CD4-positive, alpha-beta T cell (primary cell): ENCODE measurements at regions of chr7 and their contacts with region 1.

Region 1: GRCh38 chr7:73451780-73452398 is 18.3 kb downstream of the FZD9 start:
- DNase-seq: peak in 4 of 14 experiments; percentile 41 to 80 (median 70)
- ATAC-seq: peak; percentile 95
- H3K4me3 ChIP-seq: no peak overlapping the region
- H3K4me3 Mint-ChIP-seq: no peak overlapping the region
- H3K27ac ChIP-seq: no peak overlapping the region
- H3K27ac Mint-ChIP-seq: peak overlapping the region; percentile 43
- H3K4me1 ChIP-seq: no peaks in the 10 kb centered on the region
- H3K4me1 Mint-ChIP-seq: peaks cover 4% of the 10 kb centered on the region
- H3K27me3 ChIP-seq: no peaks in the 10 kb centered on the region
- H3K27me3 Mint-ChIP-seq: no peaks in the 10 kb centered on the region
- CTCF ChIP-seq: peak; percentile 100

Region 2: GRCh38 chr7:72924733-72925545 is 527.0 kb before region 1 on chr7 and contains the start of gene POM121:
- CTCF ChIA-PET with region 1: no interaction called
- POLR2A ChIA-PET with region 1: no interaction called
- intact Hi-C with region 1: loop called in 1 of 2 experiments (anchors 10 kb)
- DNase-seq: peak; percentile 72 to 95 (median 81)
- ATAC-seq: peak; percentile 94
- H3K4me3 ChIP-seq: peak within 1 kb of the TSS; percentile 91
- H3K4me3 Mint-ChIP-seq: peak within 1 kb of the TSS; percentile 99
- H3K27ac ChIP-seq: peak within 1 kb of the TSS; percentile 92 to 96
- H3K27ac Mint-ChIP-seq: peak within 1 kb of the TSS; percentile 91
- H3K4me1 ChIP-seq: peaks cover 17% of the 10 kb centered on the region
- H3K4me1 Mint-ChIP-seq: peaks cover 34% of the 10 kb centered on the region
- H3K27me3 ChIP-seq: no peaks in the 10 kb centered on the region
- H3K27me3 Mint-ChIP-seq: no peaks in the 10 kb centered on the region
- CTCF ChIP-seq: no peak
- total RNA-seq, gene POM121: 66.2 to 67.9 TPM

Region 3: GRCh38 chr7:73328696-73329095 is 123.2 kb before region 1 on chr7:
- CTCF ChIA-PET with region 1: interaction called, 3 read pairs
- POLR2A ChIA-PET with region 1: interaction called, 4 read pairs
- intact Hi-C with region 1: loop called (anchors 1 kb)
- DNase-seq: no peak
- ATAC-seq: no peak
- H3K4me3 ChIP-seq: no peak overlapping the region
- H3K4me3 Mint-ChIP-seq: no peak overlapping the region
- H3K27ac ChIP-seq: no peak overlapping the region
- H3K27ac Mint-ChIP-seq: no peak overlapping the region
- H3K4me1 ChIP-seq: peaks cover 11% of the 10 kb centered on the region
- H3K4me1 Mint-ChIP-seq: peaks cover 7% of the 10 kb centered on the region
- H3K27me3 ChIP-seq: no peaks in the 10 kb centered on the region
- H3K27me3 Mint-ChIP-seq: peaks cover 5% of the 10 kb centered on the region
- CTCF ChIP-seq: no peak

Region 4: GRCh38 chr7:74133671-74134048 is 681.8 kb after region 1 on chr7:
- CTCF ChIA-PET with region 1: no interaction called
- POLR2A ChIA-PET with region 1: no interaction called
- intact Hi-C with region 1: no loop called
- DNase-seq: no peak
- ATAC-seq: no peak
- H3K4me3 ChIP-seq: no peak overlapping the region
- H3K4me3 Mint-ChIP-seq: no peak overlapping the region
- H3K27ac ChIP-seq: no peak overlapping the region
- H3K27ac Mint-ChIP-seq: no peak overlapping the region
- H3K4me1 ChIP-seq: no peaks in the 10 kb centered on the region
- H3K4me1 Mint-ChIP-seq: no peaks in the 10 kb centered on the region
- H3K27me3 ChIP-seq: no peaks in the 10 kb centered on the region
- H3K27me3 Mint-ChIP-seq: no peaks in the 10 kb centered on the region
- CTCF ChIP-seq: no peak